ENCODE measurements at regions of chr4 and their contacts with region 1.

Region 1: GRCh38 chr4:140359562-140360427 is 13.7 kb upstream of the SCOC start:
- DNase-seq: peak; percentile 86
- ATAC-seq: peak; percentile 97
- H3K4me3 Mint-ChIP-seq: no peak overlapping the region
- H3K27ac Mint-ChIP-seq: no peak overlapping the region
- H3K4me1 Mint-ChIP-seq: no peaks in the 10 kb centered on the region
- H3K27me3 Mint-ChIP-seq: peaks cover 11% of the 10 kb centered on the region

Region 2: DNA sequence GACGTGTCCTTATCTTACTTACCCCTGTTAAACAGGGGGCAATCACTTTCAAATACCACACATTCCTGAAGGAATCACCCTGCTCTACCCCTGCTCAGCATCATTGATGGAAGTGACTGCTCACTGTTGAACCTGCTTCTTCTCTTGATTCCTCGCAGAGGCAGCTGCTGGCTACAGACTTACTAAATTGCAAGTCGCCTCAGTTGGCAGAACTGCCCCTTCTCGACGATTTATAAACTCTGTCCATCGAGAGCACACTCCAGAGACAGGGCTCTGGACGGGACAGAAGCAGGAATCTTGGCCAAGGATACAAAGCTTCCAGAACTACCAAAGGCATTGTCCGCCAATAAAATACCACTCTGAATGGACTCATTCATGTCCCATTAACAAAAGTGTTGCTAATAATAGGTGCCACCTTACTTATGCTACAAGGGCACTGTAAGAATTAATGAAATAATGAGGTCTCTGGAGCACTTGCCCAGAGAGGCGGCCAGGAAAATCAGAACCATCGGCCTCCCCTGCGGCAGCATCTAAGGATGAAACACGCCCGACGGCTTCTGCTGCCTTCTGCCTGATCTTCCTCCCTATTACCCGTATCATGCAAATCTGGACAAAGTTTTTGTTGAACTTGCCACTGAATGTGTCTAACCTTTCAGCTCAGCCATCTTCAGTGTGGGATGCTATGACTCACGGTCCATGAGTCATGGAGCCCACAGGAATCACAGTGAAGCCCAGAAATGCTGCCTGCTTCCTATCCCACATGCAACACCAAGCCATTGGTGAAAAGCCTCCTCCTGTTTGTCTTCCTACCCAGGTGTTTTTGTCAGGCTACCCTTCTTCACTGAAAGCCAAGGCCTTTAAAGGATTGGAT is 370.7 kb before region 1 on chr4:
- CTCF ChIA-PET with region 1: no interaction called
- POLR2A ChIA-PET with region 1: no interaction called
- DNase-seq: no peak
- ATAC-seq: no peak
- H3K4me3 Mint-ChIP-seq: no peak overlapping the region
- H3K27ac Mint-ChIP-seq: no peak overlapping the region
- H3K4me1 Mint-ChIP-seq: peaks cover 4% of the 10 kb centered on the region
- H3K27me3 Mint-ChIP-seq: no peaks in the 10 kb centered on the region

Region 3: GRCh38 chr4:140012688-140013486 is 346.9 kb before region 1 on chr4:
- CTCF ChIA-PET with region 1: interaction called, 29 read pairs
- POLR2A ChIA-PET with region 1: no interaction called
- DNase-seq: peak; percentile 71
- ATAC-seq: peak; percentile 97
- H3K4me3 Mint-ChIP-seq: no peak overlapping the region
- H3K27ac Mint-ChIP-seq: no peak overlapping the region
- H3K4me1 Mint-ChIP-seq: peaks cover 8% of the 10 kb centered on the region
- H3K27me3 Mint-ChIP-seq: peaks cover 7% of the 10 kb centered on the region

Region 4: DNA sequence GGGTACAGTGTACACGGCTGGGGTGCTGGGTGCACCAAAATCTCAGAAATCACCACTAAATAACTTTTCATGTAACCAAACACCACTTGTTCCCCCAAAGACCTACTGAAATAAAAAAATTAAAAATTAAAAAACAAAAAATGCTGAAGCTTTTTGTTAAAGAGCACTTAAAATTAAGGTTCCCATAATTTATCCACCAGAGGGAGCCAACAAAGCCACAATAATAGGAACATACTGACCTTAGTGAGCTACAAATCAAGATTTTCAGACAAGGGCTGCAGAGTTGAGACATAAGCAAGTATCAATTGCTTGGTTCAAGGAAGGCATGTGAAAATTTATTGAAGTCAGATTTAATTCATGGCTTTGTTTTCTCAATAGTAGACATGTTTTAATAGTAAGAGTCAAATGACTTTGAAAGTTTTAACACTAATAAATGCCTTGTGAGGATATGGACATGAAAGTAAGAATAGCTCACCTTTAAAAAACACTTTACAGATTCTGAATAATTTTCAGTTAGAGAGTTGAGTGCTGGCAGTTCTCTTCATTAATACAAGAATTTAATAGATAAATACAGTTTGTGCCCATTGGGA is 29.4 kb before region 1 on chr4:
- CTCF ChIA-PET with region 1: interaction called, 23 read pairs
- POLR2A ChIA-PET with region 1: no interaction called
- DNase-seq: no peak
- ATAC-seq: no peak
- H3K4me3 Mint-ChIP-seq: no peak overlapping the region
- H3K27ac Mint-ChIP-seq: no peak overlapping the region
- H3K4me1 Mint-ChIP-seq: peaks cover 7% of the 10 kb centered on the region
- H3K27me3 Mint-ChIP-seq: peaks cover 16% of the 10 kb centered on the region

Region 5: GRCh38 chr4:140342620-140343019 is 17.2 kb before region 1 on chr4:
- CTCF ChIA-PET with region 1: interaction called, 12 read pairs
- POLR2A ChIA-PET with region 1: no interaction called
- DNase-seq: no peak
- ATAC-seq: no peak
- H3K4me3 Mint-ChIP-seq: no peak overlapping the region
- H3K27ac Mint-ChIP-seq: no peak overlapping the region
- H3K4me1 Mint-ChIP-seq: peaks cover 2% of the 10 kb centered on the region
- H3K27me3 Mint-ChIP-seq: peaks cover 24% of the 10 kb centered on the region

Region 6: GRCh38 chr4:140373328-140374129 is 13.7 kb after region 1 on chr4 and contains the start of gene SCOC:
- CTCF ChIA-PET with region 1: interaction called, 107 read pairs
- POLR2A ChIA-PET with region 1: interaction called, 4 read pairs
- DNase-seq: peak; percentile 99
- ATAC-seq: peak; percentile 98
- H3K4me3 Mint-ChIP-seq: no peak within 1 kb of the TSS
- H3K27ac Mint-ChIP-seq: peak within 1 kb of the TSS; percentile 48
- H3K4me1 Mint-ChIP-seq: peaks cover 13% of the 10 kb centered on the region
- H3K27me3 Mint-ChIP-seq: no peaks in the 10 kb centered on the region
- total RNA-seq, gene SCOC: 22.7 to 24.9 TPM

Region 7: DNA sequence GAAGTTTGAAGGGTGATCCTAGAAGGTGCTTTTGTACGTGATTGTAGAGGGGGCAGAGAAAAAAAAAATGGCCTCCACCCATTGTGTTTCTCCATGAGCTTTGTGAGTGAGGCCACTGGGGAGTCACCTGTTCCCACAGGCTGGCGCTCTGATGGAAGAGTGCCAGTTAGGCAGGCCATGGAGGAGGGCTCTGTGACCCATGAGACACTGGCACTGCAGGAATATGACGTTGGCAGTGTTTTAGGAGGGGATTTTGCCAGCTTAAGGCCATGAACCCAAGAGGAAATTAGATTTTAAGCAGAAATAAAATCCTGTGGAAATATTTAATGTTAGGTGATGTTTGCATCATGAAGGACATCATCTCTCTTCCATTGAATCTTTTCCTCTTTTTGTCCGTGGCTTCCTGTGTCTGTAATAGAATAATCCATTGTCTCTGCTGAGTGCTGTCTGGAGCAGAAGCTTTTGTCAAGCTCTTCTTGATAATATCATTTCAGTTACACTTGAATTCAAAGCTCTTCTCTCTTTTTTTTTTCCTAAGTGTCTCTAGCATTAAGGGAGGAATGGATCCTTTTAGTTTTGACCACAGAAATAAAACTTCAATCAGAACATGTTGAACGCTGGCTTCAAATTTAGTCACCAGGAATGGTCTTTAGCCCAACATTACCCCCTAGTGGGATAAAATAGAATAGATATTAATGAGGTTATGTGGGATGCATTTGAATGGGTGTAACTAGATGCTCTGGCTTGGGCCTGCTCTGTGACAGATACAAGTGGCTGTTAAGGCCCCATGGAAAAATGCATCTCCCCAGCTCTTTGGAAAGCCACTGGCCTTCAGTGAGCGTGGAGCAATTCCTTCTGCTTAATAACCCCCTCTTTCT is 250.0 kb after region 1 on chr4:
- CTCF ChIA-PET with region 1: interaction called, 44 read pairs
- POLR2A ChIA-PET with region 1: no interaction called
- DNase-seq: no peak
- ATAC-seq: peak; percentile 69
- H3K4me3 Mint-ChIP-seq: no peak overlapping the region
- H3K27ac Mint-ChIP-seq: no peak overlapping the region
- H3K4me1 Mint-ChIP-seq: no peaks in the 10 kb centered on the region
- H3K27me3 Mint-ChIP-seq: no peaks in the 10 kb centered on the region